Cardiac septum (tissue), 1 donor: ENCODE measurements at regions of chr22 and their contacts with region 1.

Region 1: DNA sequence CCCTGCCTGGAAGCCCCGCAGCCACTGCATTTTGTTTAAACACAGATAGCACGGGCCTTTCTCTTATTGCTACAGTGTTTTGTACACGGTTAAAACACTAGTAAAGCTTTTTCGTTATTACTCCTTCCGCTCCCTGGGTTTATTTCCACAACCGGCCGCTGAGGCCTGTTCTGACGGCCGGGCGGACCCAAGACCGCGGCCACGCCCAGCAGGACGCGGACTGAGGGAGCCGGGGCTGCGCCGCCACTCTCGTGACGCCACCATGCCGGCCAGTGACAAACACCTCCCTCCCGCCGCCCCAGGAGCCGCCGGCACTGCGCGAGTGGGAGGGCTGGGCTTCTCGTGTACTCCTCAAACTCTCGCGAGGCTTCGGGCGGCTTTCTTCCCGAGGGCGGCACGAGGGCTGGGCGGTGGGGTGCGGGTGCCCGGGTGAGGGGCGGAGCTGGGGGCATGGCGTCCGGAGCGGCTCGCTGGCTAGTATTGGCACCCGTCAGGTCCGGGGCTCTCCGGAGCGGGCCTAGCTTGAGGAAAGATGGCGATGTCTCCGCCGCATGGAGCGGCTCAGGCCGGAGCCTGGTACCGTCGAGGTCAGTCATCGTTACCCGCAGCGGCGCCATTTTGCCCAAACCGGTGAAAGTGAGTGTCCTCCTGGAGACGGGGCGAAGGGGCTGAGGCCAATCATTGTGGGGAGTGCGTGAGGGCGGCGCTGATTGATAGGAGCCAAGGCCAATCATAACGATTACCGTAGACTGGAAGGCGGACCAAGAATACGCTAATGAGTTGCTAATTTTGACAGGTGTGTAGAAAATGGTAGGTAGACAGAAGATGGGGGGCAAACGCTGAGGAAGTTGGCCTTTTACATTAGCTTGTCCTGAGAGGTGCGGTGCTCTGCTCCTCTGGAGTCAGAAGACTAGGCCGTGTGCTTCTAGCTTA is at the start of gene SMDT1:
- DNase-seq: peak; percentile 100
- total RNA-seq, gene SMDT1: 123 TPM

Region 2: DNA sequence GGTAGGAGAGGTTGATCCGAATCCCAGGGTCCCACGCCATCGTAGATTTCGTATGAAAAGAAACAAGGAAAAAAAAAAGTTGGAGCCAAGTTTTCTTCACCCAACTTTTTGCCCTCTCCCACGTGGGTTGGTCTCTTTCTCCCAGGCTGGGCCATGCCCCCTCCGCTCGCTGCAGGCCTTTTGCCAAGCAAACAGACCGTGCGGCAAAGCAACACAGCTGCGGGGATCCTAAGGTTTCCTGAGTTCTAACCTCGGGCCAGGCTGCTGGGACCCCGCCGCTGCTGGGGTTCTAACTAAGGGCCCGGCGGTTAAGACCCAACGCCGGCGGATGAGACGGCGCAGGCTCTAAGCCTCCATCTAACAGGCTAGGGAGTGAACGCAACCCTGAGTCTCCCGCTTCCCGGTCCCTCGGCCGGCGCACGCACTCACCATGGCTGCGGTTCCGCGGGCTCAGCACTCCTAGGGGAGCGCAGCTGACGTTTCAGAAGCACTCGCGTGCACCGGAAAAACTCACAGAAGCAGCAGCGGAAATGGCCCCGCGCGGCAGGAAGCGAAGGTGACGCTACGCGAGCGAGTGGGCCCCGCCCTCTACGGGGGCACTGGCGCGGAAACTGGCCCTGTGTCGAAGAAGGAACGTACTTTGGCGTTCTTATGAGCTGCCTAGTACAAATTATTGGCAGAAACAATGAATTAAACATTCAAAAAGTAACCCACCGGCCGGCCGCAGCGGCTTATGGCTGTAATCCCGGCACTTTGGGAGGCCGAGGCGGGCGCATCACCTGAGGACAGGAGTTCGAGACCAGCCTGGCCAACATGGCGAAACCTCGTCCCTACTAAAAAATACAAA is 391.0 kb before region 1 on chr22 and contains the start of gene SNU13:
- intact Hi-C with region 1: loop called (anchors 10 kb)
- DNase-seq: peak; percentile 96
- total RNA-seq, gene SNU13: 149 TPM

Region 3: DNA sequence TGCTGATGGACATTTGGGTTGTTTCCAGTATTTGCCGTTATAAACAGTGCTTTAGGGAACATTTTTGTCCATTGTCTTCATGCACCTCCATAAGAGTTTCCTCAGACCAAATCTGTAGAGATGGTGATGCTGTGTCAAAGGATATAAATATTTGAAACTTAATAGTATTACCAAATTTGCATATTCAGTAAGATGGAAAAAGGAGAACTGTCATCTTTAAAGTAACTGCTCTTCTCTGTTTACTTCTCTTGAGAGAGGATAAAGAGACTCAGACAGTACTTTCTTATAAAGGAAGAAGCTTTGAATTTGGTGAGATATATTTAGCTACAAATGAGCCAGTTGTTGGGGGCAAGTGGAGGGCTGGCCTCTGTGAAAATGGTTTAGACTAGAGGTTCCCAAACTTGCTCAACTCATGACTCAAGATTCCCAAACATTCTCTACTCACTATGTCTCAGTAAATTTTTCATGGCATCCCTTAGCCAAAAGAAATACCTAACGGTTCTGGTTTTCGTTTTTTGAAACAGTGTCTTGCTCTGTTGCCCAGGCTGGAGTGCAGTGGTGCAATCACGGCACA is 190.9 kb before region 1 on chr22:
- intact Hi-C with region 1: no loop called
- DNase-seq: no peak